ENCODE measurements at regions of chr12 and their contacts with region 1.

Region 1: DNA sequence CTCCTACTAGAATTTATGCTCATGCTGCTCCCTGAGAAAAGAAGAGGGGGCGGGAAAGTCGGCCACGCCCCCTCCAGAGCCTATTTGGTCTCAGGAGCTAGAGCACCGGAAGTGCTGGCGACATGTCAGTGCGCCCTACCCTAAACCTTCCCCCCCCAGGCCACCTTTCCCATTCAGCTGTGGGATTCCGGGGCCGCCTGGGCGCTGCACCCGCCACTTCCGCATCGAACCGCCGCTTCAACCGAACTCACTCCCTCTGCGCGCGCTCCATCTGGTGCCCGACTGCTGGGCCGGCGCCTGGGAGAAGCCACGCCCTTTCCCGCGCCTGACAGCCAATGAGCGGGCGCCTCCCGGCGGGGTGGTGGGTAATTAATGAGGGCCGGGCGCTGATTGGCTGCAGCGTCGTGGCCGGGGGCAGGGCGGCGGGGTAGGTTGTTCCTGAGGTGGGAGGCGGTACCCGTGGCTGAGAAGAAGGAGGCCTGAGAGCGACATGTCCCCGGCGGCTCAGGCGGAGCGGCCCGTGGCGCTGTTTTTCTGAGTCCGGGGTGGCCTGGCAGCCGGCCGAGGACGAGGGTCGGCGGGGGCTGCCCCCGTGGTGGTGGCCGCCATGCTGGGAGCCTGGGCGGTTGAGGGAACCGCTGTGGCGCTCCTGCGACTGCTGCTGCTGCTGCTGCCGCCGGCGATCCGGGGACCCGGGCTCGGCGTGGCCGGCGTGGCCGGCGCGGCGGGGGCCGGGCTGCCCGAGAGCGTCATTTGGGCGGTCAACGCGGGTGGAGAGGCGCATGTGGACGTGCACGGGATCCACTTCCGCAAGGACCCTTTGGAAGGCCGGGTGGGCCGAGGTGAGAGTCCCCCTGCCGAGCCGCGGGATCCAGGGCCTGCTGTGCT is at the start of gene MLEC:
- DNase-seq: peak; percentile 99
- H3K4me3 ChIP-seq: peak within 1 kb of the TSS; percentile 91
- H3K27ac ChIP-seq: peak within 1 kb of the TSS; percentile 94
- H3K4me1 ChIP-seq: peaks cover 56% of the 10 kb centered on the region
- CTCF ChIP-seq: peak; percentile 65
- total RNA-seq, gene MLEC: 69.7 and 74.1 TPM in 2 replicates

Region 2: GRCh38 chr12:120554678-120555077 is 132.3 kb before region 1 on chr12:
- CTCF ChIA-PET with region 1: no interaction called
- POLR2A ChIA-PET with region 1: interaction called, 11 read pairs
- intact Hi-C with region 1: no loop called
- DNase-seq: no peak
- H3K4me3 ChIP-seq: no peak overlapping the region
- H3K27ac ChIP-seq: no peak overlapping the region
- H3K4me1 ChIP-seq: no peaks in the 10 kb centered on the region
- CTCF ChIP-seq: no peak

Region 3: DNA sequence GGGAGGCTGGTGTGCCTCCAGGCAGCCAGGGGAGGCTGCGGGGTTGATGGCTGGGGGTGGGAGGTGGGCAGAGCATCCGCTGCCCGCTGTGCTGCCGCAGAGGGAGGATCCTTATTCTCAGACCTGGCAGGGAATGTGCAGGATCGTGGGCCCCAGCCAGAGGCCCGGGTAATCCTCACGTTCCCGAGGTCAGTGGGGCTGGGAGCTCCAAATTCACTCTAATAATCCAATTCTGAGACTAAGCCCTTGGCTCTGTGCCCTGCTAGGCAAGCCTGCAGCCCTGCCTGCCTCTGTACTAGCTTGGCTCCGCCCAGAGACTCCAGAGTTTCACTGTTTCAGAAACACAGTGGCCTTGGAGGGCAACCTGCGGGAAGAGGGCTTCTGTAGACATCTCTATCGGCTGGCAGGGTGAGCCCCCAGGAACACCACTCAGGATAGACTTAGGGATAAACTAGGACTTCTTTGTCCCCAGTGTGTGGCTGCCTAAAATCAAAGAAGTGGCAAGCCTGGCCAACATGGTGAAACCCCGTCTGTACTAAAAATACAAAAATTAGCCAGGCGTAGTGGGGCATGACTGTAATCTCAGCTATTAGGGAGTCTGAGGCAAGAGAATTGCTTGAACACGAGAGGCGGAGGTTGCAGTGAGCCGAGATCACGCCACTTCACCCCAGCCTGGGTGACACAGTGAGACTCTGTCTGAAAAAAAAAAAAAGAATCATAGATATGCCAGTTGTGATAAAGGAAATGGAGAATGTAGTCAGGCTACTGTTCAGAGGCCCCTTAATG is 17.7 kb before region 1 on chr12:
- CTCF ChIA-PET with region 1: interaction called, 3 read pairs
- POLR2A ChIA-PET with region 1: interaction called, 3 read pairs
- intact Hi-C with region 1: loop called (anchors 1 kb)
- DNase-seq: peak; percentile 72
- H3K4me3 ChIP-seq: peak overlapping the region; percentile 44
- H3K27ac ChIP-seq: peak overlapping the region; percentile 94
- H3K4me1 ChIP-seq: peaks cover 78% of the 10 kb centered on the region
- CTCF ChIP-seq: no peak

Region 4: GRCh38 chr12:120710031-120710804 is 23.3 kb after region 1 on chr12 and contains the start of gene UNC119B:
- CTCF ChIA-PET with region 1: no interaction called
- POLR2A ChIA-PET with region 1: interaction called, 5 read pairs
- intact Hi-C with region 1: loop called (anchors 1 kb)
- DNase-seq: peak; percentile 72
- H3K4me3 ChIP-seq: peak within 1 kb of the TSS; percentile 98
- H3K27ac ChIP-seq: peak within 1 kb of the TSS; percentile 46
- H3K4me1 ChIP-seq: peaks cover 37% of the 10 kb centered on the region
- CTCF ChIP-seq: no peak
- total RNA-seq, gene UNC119B: 16.5 and 17.2 TPM in 2 replicates

Region 5: DNA sequence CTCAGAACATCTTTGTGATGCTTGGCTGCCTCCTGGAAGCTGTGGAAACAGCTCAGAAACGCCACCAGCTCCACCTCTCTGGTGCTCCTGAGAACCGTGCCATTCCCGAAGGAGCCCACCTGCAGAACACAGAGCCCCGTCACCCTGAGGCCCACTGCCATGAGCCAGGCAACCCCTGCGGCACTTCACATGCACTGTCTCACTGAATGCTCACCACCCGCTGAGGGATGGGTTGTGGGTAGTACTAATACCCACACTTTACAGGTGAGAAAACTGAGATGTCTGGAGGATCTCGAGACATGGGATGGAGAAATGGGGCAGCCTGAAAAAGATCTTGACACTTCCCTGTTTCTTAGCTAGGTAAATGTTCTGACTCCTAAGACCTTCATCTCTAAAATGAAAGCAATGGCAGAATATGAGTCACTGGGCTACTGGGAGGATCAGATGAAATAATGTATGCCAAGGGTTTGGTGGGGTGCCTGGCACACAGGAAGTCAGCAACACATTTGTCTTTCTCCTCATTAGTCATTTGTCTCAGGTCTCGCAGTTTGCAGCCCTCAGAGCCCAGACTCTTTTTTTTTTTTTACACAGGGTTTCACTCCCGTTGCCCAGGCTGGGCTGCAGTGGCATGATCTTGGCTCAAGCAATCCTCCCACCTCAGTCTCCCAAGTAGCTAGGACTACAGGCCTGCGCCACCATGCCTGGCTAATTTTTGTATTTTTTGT is 346.9 kb after region 1 on chr12:
- CTCF ChIA-PET with region 1: no interaction called
- POLR2A ChIA-PET with region 1: no interaction called
- intact Hi-C with region 1: no loop called
- DNase-seq: no peak
- H3K4me3 ChIP-seq: no peak overlapping the region
- H3K27ac ChIP-seq: no peak overlapping the region
- H3K4me1 ChIP-seq: peaks cover 6% of the 10 kb centered on the region
- CTCF ChIP-seq: no peak

Measured in OCI-LY7 (cell line).